GM12878 (cell line): ENCODE measurements at regions of chr1 and their contacts with region 1.

Region 1: DNA sequence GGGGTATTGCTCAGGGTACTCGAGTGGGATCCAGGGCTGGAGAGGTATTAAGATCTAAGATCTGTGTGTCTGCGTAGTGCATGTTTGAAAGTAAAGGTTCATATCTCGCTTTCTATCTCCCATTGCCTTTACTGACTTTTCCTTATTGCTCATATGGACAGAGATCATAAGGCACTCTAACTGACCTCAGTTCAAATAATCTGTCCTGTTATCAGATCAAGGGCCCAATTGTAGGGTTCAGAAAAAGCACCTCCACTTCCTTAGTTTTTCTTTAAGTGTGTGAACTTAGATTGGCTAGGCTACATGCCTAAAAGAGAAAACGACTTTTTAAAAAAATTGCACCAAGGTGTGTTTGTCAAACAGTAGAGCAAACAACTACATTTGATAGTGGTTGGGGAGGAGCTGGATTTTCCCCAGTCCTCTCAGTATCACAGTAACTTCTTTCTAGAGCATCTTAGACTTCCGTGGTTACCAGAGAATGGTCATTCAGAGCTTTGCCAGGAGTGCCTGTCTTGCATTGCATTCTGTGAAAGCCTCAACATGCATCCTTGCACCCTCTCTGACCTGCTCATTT is 57.6 kb downstream of the LMO4 start:
- DNase-seq: no peak
- ATAC-seq: no peak
- H3K4me3 ChIP-seq: no peak overlapping the region
- H3K27ac ChIP-seq: no peak overlapping the region
- H3K4me1 ChIP-seq: no peaks in the 10 kb centered on the region
- H3K27me3 ChIP-seq: no peaks in the 10 kb centered on the region
- CTCF ChIP-seq: no peak
- EP300 ChIP-seq: no peak
- POLR2A ChIP-seq: no peak
- RAD21 ChIP-seq: no peak

Region 2: GRCh38 chr1:87435484-87435883 is 49.2 kb after region 1 on chr1:
- CTCF ChIA-PET with region 1: no interaction called
- POLR2A ChIA-PET with region 1: no interaction called
- RAD21 ChIA-PET with region 1: no interaction called
- SMC1A ChIA-PET with region 1: no interaction called
- in situ Hi-C with region 1: loop called (anchors 5 kb)
- intact Hi-C with region 1: no loop called
- DNase-seq: peak; percentile 36
- ATAC-seq: peak; percentile 52
- H3K4me3 ChIP-seq: no peak overlapping the region
- H3K27ac ChIP-seq: no peak overlapping the region
- H3K4me1 ChIP-seq: peaks cover 8% of the 10 kb centered on the region; the same call in 1 of the 2 replicates
- H3K27me3 ChIP-seq: no peaks in the 10 kb centered on the region
- CTCF ChIP-seq: no peak
- EP300 ChIP-seq: no peak
- POLR2A ChIP-seq: no peak
- RAD21 ChIP-seq: no peak